ENCODE measurements at regions of chr13 and their contacts with region 1.

Region 1: GRCh38 chr13:48334534-48335127 is 31.1 kb downstream of the RB1 start:
- DNase-seq: peak; percentile 8
- H3K4me3 ChIP-seq: no peak overlapping the region
- H3K27ac ChIP-seq: no peak overlapping the region
- H3K4me1 ChIP-seq: no peaks in the 10 kb centered on the region
- H3K27me3 ChIP-seq: no peaks in the 10 kb centered on the region
- CTCF ChIP-seq: peak in 3 of 4 experiments; percentile 58 to 79 (median 79)
- POLR2A ChIP-seq: no peak

Region 2: DNA sequence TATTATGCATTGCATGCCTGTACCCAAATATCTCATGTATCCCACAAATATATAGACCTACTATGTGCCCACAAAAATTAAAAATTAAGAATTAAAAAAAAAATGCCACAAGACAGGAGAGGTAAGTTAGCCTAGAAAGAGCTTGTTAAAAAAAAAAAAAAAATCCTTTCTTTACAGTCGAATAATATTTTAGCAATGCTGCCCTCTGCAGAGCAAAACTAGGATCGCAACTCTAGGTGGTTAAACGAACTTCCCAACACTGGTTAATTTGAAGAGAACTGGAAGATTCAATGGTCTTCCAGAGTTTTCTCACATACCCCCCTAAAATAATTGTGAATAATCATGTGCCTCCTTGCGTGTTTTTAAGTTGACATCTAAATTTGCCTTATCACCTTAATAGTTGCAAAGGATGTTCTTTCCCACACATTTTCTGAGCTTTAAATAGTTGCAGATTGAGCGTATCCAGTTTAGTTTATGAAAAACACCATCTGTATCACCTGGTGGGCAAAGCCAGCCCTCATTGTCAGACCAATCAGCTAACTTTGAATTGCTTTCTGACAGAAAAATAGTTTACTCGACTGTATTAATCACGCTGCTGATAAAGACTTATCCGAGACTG is 245.7 kb after region 1 on chr13:
- intact Hi-C with region 1: loop called (anchors 2 kb)
- DNase-seq: peak; percentile 79
- H3K4me3 ChIP-seq: no peak overlapping the region
- H3K27ac ChIP-seq: peak overlapping the region in 1 of 2 donors; percentile 63
- H3K4me1 ChIP-seq: peaks cover 3% of the 10 kb centered on the region
- H3K27me3 ChIP-seq: no peaks in the 10 kb centered on the region
- CTCF ChIP-seq: peak; percentile 40 to 84 (median 74)
- POLR2A ChIP-seq: no peak